ENCODE measurements at regions of chr10 and their contacts with region 1.

Region 1: DNA sequence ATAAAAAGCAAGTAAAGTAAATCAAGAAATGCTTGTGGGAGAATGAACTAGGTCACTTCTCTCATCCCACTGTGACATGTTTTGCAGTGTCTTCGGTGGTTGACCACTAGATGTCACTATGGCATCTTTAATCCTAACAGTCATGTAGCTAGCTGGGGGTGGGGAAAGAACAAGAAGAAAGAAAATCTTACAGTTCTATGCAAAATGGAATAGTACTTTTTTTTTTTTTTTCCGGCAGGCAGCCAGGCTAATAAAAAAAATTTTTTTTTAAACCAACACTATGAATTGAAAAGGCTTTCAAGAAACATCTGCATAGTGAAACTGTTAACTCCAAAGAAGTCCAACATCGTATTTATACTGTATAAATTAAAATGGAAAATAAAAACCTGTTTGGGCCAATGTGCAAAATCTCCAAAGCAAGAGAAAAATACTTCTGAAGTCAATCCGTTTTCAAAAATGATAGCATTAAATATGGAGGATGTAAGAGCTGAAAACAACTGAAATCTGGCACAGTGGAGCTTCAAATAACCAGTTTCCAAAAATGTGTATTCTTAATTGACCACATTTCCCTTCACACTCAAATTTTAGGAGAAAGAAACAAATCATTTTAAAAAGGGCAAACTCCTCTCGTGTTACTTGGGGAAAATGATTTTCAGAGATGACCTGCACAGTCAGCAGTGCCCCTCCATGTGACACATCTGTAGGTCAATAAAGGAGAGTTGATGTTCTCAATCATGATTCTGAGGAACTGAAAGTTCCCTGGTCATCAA is 38.5 kb downstream of the CDK1 start:
- DNase-seq: no peak
- ATAC-seq: peak; percentile 92

Region 2: GRCh38 chr10:60883187-60883586 is 66.4 kb after region 1 on chr10:
- intact Hi-C with region 1: no loop called
- DNase-seq: peak; percentile 29
- ATAC-seq: peak; percentile 34 to 81

Region 3: DNA sequence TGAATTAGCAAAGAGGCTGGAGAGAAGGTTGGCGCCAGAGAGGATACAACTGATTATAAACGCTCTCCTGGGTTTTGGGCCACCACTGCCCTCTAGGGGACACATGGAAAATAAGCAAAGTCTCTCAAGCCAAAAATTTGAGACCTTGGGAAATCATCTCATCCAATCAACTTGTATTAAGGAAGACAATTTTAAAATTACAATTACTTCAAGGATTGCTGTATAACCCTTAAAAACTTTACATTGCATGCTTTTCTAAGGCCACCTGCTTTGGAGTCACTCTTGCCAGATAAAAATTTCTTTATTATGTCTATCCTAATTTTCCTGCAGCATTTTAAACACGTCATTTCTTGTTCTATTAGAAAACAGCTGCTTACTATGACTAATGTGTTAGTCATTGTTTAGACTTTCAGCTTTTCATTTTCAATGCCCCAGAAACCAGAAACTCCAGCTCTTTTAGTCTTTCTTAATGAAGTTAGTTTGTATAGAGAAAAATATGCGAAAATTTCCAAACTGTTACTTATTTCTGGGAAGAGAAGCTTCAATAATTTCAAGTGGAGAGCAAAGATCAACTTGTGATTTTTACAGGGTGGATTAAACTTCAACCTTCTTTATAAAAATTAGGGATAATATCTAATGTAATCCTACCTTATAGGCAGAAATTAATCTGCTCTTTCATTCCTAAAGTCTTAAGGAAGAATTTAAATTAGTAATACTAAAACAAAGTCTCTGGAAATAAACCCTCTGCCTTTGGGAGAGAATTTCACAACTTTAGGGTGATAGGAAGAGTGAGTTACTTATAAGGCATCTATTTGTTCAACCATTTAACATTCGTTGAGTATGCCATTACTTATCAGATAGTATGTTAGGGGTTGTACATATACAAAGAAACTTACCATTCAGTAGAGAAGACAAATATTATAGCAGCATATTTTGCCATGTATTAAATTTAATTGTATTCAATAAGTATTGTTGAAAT is 147.7 kb after region 1 on chr10:
- intact Hi-C with region 1: loop called (anchors 2 to 5 kb)
- DNase-seq: peak; percentile 70
- ATAC-seq: peak; percentile 91 to 92

Region 4: DNA sequence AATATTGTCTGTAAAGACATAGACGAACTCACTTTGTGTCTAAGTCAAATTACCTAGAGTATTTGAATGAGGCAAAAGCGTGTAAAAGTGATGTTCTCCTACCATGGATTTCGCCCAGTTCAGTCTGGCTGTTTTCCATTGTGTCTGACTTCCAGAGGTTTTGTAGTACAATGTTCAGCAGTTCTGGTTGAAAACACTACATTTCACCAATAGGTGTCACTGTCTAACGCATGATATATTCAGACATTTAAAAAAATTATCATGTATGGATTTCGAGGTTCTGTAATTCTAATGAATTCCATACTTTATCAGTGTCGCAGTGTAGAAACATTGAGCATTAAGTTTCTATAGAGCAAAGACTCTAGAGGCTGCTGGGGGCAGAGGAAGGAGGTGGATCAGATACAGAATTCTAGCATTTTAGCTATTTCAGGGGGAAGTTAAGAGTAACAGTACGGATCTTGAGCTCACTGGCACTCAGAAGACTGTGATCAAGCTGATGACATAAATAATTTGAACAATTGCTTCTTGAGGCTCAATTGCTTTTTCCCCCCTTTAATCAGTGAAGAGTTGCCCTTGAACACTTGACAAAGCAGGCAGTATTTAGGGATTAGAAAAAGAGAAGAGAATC is 324.1 kb after region 1 on chr10:
- intact Hi-C with region 1: loop called in 1 of 2 experiments (anchors 5 kb)
- DNase-seq: no peak
- ATAC-seq: peak; percentile 74 to 75

Region 5: DNA sequence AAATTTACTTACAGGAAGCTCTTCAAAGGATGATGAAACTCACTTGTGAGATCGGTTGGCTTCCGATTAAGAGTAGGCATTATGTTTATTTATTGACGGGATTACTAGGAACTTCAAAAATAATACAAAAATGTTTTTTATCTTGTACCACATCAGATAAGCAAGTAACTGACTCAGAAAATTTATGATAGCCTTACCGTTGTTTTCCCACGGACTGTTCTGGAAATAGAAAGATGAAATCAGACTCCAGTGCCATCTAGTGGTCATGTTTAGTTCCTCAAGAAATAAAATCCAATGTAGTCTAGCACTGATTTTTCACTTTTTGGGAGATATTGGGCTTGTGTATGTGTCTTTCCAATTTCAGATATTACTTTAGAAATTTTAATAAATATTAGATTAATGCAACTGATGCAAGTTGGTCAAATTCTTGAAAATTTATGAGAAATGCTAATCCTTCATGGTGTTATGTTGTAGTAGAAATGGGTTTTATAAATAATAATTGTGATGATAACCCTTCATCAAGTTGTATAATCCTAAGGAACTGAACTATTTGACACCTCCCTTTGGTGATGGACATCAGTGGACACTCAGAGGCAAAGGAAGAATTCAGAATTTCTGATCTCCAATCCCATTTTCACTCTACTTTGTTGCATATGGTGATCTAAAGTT is 467.5 kb after region 1 on chr10:
- intact Hi-C with region 1: loop called (anchors 2 to 10 kb)
- DNase-seq: no peak
- ATAC-seq: peak; percentile 50 to 59

Region 6: GRCh38 chr10:61606951-61607907 is 790.4 kb after region 1 on chr10:
- intact Hi-C with region 1: no loop called
- DNase-seq: no peak
- ATAC-seq: no peak

Region 7: DNA sequence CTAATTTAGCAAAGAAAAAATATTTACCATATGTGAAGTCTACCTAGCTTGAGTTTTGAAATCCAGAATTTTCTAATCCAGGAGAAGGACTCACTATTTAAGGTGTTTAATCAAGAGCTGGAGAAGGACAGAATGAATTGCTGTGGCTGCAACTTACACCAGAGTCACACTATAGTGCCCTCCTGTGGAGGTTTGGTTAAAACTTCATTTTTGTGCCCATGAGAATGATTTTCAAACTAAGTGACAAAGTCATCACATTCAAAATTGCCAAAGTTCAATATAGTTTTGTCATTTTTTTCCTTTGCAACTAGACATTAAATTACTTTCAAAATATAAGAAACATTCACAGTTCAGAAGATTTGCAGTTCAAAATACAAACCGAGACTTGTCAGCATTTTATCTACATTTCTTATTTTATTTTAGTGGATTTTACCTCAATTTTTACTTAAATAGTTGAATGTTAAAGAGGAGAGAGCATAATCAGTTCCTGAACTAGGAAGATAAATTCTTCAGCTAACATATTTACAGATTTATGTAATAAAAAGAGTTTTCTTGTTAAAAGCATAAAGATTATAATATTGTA is 916.6 kb after region 1 on chr10:
- intact Hi-C with region 1: loop called in 1 of 2 experiments (anchors 10 kb)
- DNase-seq: no peak
- ATAC-seq: no peak